T-cell (primary cell): ENCODE measurements at regions of chr6 and their contacts with region 1.

Region 1: DNA sequence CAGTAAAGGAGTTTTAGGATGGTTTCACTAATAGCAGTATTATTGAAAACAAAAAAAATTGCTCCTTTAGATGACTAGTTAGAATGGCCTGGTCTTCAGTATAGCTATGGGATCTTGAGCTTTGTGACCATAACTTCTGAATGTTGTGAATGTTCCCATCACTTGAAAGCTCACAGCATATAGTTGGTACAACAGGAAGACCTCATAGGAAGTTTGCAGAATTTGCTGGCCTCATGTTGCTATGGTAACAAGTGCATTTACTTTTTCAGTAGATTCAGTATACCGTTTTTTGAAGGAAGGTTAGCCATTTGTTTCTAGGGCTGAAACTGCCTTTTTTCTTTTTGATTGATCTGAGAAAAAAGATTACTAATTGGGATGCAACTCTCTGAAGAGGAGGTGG is 8.3 kb downstream of the PHF3 start:
- DNase-seq: peak in 9 of 35 experiments; percentile 4 to 71 (median 19)
- ATAC-seq: peak in 3 of 4 experiments; percentile 26 to 85 (median 38)
- H3K4me3 ChIP-seq: no peak overlapping the region
- H3K4me3 Mint-ChIP-seq: peak overlapping the region in 1 of 3 donors; percentile 25
- H3K27ac ChIP-seq: no peak overlapping the region
- H3K27ac Mint-ChIP-seq: no peak overlapping the region
- H3K4me1 ChIP-seq: peaks cover 9 to 28% of the 10 kb centered on the region in 2 experiments
- H3K4me1 Mint-ChIP-seq: peaks cover 82 to 89% (median 83%) of the 10 kb centered on the region in 3 donors
- H3K27me3 ChIP-seq: no peaks in the 10 kb centered on the region
- H3K27me3 Mint-ChIP-seq: no peaks in the 10 kb centered on the region

Region 2: DNA sequence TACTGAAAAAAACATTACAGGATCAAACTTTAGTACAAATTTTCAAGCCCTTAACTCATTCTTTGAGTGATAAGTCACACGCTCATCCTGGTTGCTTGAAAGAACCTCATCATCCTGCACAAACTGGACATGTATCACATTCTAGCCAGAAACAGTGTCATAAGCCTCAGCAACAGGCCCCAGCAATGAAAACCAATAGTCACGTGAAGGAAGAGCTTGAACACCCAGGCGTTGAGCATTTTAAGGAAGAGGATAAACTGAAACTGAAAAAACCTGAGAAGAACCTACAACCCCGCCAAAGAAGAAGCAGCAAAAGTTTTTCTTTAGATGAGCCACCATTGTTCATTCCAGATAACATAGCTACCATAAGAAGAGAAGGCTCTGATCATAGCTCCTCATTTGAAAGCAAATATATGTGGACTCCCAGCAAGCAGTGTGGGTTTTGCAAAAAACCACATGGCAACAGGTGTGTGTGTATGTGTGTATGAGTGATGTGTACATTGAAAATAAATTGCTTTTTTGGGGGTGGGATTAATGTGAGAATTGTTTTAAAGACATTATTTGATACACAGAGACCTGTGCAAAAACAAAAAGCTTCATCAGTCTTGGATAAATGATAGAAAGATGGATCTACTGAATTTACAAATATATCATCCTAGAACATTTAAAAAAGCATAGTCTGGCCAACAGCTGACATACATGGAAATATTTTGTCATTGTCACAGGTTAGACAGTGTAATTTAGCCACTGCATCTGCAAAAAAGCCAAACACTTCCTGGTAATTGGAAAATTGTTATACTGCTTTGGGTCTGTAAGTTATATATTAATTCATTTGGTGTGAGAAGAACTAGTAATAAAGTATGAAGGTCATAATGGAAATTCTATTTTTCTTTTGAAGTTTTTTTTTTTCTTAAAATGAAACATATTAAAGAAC is 41.9 kb after region 1 on chr6:
- CTCF ChIA-PET with region 1: interaction called in 1 of 2 experiments, 3 read pairs
- POLR2A ChIA-PET with region 1: interaction called, 5 to 12 read pairs
- DNase-seq: no peak
- ATAC-seq: no peak
- H3K4me3 ChIP-seq: no peak overlapping the region
- H3K4me3 Mint-ChIP-seq: no peak overlapping the region
- H3K27ac ChIP-seq: no peak overlapping the region
- H3K27ac Mint-ChIP-seq: peak overlapping the region in 1 of 2 donors; percentile 4
- H3K4me1 ChIP-seq: peaks cover 0 to 2% of the 10 kb centered on the region in 2 experiments
- H3K4me1 Mint-ChIP-seq: peaks cover 40 to 54% (median 48%) of the 10 kb centered on the region in 3 donors
- H3K27me3 ChIP-seq: no peaks in the 10 kb centered on the region
- H3K27me3 Mint-ChIP-seq: no peaks in the 10 kb centered on the region